ENCODE measurements at regions of chr1 and their contacts with region 1.

Region 1: DNA sequence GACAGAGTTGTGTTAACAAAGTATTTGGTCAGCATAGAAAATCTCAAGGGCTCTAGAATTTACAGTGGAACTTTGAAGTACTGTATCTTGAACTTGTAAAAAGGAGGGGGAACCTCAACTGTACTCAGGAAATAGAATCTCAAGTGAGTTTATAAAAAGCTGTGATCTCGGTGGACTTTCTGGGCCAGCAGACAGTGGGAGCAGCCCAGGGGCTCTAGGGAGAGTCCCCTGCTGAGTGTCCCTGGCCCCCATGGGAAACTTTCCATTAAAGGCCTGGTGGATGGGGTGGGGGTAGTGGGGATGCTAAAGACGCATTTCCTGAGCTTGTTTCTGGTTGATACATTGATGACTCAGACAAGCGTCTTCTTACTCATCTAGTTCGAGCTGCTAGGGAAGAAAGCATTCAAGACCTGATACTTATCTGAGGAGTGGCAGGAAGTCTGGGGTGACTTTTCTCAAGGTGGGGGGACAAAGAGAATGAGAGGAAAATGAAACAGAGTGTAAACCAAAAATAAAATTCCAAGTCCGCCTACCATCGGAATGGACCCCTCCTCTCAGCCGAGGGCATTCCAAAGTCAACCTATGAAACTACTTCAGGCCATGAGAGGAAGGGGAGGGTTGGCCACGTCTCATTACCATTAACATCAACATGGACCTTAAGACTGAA is 65.5 kb downstream of the NID1 start:
- DNase-seq: peak; percentile 94
- H3K4me3 Mint-ChIP-seq: peak overlapping the region; percentile 0
- H3K27ac Mint-ChIP-seq: peak overlapping the region; percentile 71
- H3K4me1 Mint-ChIP-seq: peaks cover 45% of the 10 kb centered on the region
- H3K27me3 Mint-ChIP-seq: no peaks in the 10 kb centered on the region
- CTCF ChIP-seq: no peak

Region 2: DNA sequence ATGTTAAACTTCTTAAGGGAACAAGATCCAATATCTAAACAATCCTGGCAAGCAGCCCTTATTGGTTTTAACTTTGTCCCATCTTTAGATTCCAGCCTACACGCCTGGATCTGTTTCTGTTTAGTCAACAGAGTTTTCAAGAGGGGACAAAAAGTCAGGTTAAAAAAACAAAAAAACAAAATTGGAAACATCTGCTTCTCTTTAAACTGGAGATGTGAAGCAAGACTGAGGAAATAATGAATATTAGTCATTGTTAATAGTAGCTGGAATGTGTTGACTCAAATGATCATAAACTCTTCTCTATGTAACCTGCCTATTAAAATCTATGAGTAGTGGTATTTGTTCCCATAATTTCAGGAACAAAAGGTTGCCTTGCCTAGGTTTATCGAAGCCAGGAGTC is 10.5 kb after region 1 on chr1:
- CTCF ChIA-PET with region 1: interaction called, 3 read pairs
- POLR2A ChIA-PET with region 1: interaction called, 22 read pairs
- intact Hi-C with region 1: no loop called
- DNase-seq: peak; percentile 69
- H3K4me3 Mint-ChIP-seq: no peak overlapping the region
- H3K27ac Mint-ChIP-seq: peak overlapping the region; percentile 78
- H3K4me1 Mint-ChIP-seq: peaks cover 15% of the 10 kb centered on the region
- H3K27me3 Mint-ChIP-seq: no peaks in the 10 kb centered on the region
- CTCF ChIP-seq: no peak

Region 3: GRCh38 chr1:236018885-236019453 is 19.6 kb after region 1 on chr1:
- CTCF ChIA-PET with region 1: no interaction called
- POLR2A ChIA-PET with region 1: interaction called, 21 read pairs
- intact Hi-C with region 1: no loop called
- DNase-seq: no peak
- H3K4me3 Mint-ChIP-seq: no peak overlapping the region
- H3K27ac Mint-ChIP-seq: no peak overlapping the region
- H3K4me1 Mint-ChIP-seq: peaks cover 18% of the 10 kb centered on the region
- H3K27me3 Mint-ChIP-seq: no peaks in the 10 kb centered on the region
- CTCF ChIP-seq: no peak

Region 4: GRCh38 chr1:236365999-236366570 is 366.7 kb after region 1 on chr1:
- CTCF ChIA-PET with region 1: no interaction called
- POLR2A ChIA-PET with region 1: no interaction called
- intact Hi-C with region 1: no loop called
- DNase-seq: no peak
- H3K4me3 Mint-ChIP-seq: no peak overlapping the region
- H3K27ac Mint-ChIP-seq: no peak overlapping the region
- H3K4me1 Mint-ChIP-seq: no peaks in the 10 kb centered on the region
- H3K27me3 Mint-ChIP-seq: no peaks in the 10 kb centered on the region
- CTCF ChIP-seq: no peak